CD4-positive, alpha-beta memory T cell (primary cell): ENCODE measurements at regions of chr1 and their contacts with region 1.

Region 1: GRCh38 chr1:22025368-22026155 is 24.1 kb downstream of the CELA3A start:
- DNase-seq: peak; percentile 89 to 97 (median 92)
- H3K4me3 ChIP-seq: peak overlapping the region; percentile 95 to 99
- H3K4me3 Mint-ChIP-seq: peak overlapping the region; percentile 89 to 98 (median 94)
- H3K27ac ChIP-seq: peak overlapping the region; percentile 97
- H3K27ac Mint-ChIP-seq: peak overlapping the region; percentile 91 to 100 (median 99)
- H3K4me1 ChIP-seq: peaks cover 46% of the 10 kb centered on the region
- H3K4me1 Mint-ChIP-seq: peaks cover 31 to 62% (median 47%) of the 10 kb centered on the region in 4 donors
- H3K27me3 ChIP-seq: no peaks in the 10 kb centered on the region
- H3K27me3 Mint-ChIP-seq: no peaks in the 10 kb centered on the region

Region 2: GRCh38 chr1:21865943-21866706 is 159.4 kb before region 1 on chr1:
- CTCF ChIA-PET with region 1: no interaction called
- POLR2A ChIA-PET with region 1: no interaction called
- intact Hi-C with region 1: no loop called
- DNase-seq: no peak
- H3K4me3 ChIP-seq: no peak overlapping the region
- H3K4me3 Mint-ChIP-seq: no peak overlapping the region
- H3K27ac ChIP-seq: no peak overlapping the region
- H3K27ac Mint-ChIP-seq: no peak overlapping the region
- H3K4me1 ChIP-seq: no peaks in the 10 kb centered on the region
- H3K4me1 Mint-ChIP-seq: peaks cover 0 to 1% (median 0%) of the 10 kb centered on the region in 4 donors
- H3K27me3 ChIP-seq: no peaks in the 10 kb centered on the region
- H3K27me3 Mint-ChIP-seq: no peaks in the 10 kb centered on the region

Region 3: DNA sequence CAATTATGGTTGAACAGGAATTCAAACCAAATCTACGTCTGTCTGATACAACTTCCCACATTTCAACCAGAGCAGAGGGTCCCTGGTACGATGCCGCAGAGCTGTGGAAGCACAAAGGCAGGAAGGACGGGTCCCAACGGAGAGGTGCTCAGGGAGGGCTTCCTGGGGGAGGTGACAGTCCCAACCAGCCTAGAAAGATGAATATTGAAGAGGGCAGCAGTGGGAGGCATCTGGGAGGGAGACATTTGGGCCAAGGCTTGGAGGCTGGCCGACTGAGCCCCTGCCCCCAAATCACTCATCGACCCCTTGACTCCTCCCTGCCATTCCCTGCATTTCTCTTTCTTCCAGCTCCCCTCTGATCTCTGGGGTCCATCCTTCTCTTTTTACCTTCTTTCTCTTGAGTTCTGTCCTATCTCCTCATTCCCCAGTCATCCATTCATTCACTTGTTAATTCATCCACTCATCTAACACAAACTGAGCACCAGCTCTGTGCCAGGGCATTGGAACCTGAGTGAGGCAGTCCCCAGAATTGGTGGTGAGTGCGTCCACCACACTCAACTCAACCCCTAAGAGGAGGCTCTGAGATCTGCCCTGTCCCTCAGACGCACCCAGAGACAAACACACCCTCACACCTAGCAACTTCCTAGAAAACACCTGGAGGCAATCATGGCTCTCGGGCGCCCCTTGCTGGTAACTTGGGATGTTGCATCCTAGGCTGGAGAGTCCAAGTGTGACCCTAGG is 61.9 kb before region 1 on chr1:
- CTCF ChIA-PET with region 1: interaction called, 7 read pairs
- POLR2A ChIA-PET with region 1: no interaction called
- intact Hi-C with region 1: loop called (anchors 2 kb)
- DNase-seq: peak; percentile 70 to 82 (median 77)
- H3K4me3 ChIP-seq: no peak overlapping the region
- H3K4me3 Mint-ChIP-seq: peak overlapping the region in 1 of 8 donors; percentile 1
- H3K27ac ChIP-seq: no peak overlapping the region
- H3K27ac Mint-ChIP-seq: peak overlapping the region; percentile 4 to 90 (median 63)
- H3K4me1 ChIP-seq: peaks cover 3% of the 10 kb centered on the region
- H3K4me1 Mint-ChIP-seq: peaks cover 6 to 12% (median 6%) of the 10 kb centered on the region in 4 donors
- H3K27me3 ChIP-seq: no peaks in the 10 kb centered on the region
- H3K27me3 Mint-ChIP-seq: peaks cover 0 to 2% of the 10 kb centered on the region in 2 donors

Region 4: DNA sequence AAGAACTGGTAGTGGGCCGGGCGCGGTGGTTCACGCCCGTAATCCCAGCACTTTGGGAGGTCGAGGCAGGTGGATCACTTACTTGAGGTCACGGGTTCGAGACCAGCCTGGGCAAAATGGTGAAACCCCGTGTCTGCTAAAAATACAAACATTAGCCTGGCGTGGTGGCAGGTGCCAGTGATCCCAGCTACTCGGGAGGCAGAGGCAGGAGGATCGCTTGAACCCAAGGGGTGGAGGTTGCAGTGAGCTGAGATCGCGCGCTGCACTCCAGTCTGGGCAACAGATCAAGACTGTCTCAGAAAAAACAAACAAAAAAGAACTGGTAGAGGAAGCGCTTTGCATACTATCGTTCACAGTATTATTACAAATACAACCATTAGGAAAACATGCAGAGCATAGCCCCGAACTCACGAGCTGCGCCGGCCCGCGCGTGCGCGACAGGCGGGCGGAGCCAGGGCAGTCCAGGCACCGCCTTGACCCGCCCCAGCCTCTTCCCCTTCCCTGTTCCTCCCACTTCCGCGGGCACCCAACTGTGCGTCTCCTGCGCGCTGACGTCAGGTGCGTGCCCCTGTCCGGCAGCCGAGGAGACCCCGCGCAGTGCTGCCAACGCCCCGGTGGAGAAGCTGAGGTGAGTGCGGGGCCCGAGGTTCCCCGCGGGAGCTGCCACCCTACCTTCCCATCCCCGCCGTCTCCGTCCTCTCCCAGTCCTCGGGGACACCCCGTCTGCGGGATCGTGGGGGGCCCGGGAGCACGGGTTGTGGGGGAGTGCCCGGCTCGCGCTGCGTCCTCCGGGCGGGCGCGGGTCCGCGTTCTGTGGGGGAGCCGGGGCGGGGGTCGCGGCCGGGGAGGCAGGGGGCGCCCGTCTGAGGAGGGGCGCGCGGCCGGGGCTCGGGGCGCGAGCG is 26.8 kb after region 1 on chr1 and contains the start of gene CDC42:
- CTCF ChIA-PET with region 1: interaction called, 57 read pairs
- POLR2A ChIA-PET with region 1: interaction called, 874 read pairs
- intact Hi-C with region 1: loop called (anchors 1 kb)
- DNase-seq: peak; percentile 97 to 98 (median 98)
- H3K4me3 ChIP-seq: peak within 1 kb of the TSS; percentile 82 to 93
- H3K4me3 Mint-ChIP-seq: peak within 1 kb of the TSS; percentile 97 to 100 (median 99)
- H3K27ac ChIP-seq: peak within 1 kb of the TSS; percentile 98
- H3K27ac Mint-ChIP-seq: peak within 1 kb of the TSS; percentile 98 to 100 (median 100)
- H3K4me1 ChIP-seq: peaks cover 54% of the 10 kb centered on the region
- H3K4me1 Mint-ChIP-seq: peaks cover 34 to 75% (median 54%) of the 10 kb centered on the region in 4 donors
- H3K27me3 ChIP-seq: no peaks in the 10 kb centered on the region
- H3K27me3 Mint-ChIP-seq: no peaks in the 10 kb centered on the region
- total RNA-seq, gene CDC42: 195 to 202 TPM

Region 5: GRCh38 chr1:22071511-22071910 is 45.9 kb after region 1 on chr1:
- CTCF ChIA-PET with region 1: interaction called, 10 read pairs
- POLR2A ChIA-PET with region 1: interaction called, 27 read pairs
- intact Hi-C with region 1: no loop called
- DNase-seq: no peak
- H3K4me3 ChIP-seq: no peak overlapping the region
- H3K4me3 Mint-ChIP-seq: peak overlapping the region in 7 of 8 donors; percentile 21 to 78 (median 54)
- H3K27ac ChIP-seq: no peak overlapping the region
- H3K27ac Mint-ChIP-seq: peak overlapping the region; percentile 24 to 87 (median 78)
- H3K4me1 ChIP-seq: peaks cover 89% of the 10 kb centered on the region
- H3K4me1 Mint-ChIP-seq: peaks cover 63 to 92% (median 75%) of the 10 kb centered on the region in 4 donors
- H3K27me3 ChIP-seq: no peaks in the 10 kb centered on the region
- H3K27me3 Mint-ChIP-seq: no peaks in the 10 kb centered on the region

Region 6: DNA sequence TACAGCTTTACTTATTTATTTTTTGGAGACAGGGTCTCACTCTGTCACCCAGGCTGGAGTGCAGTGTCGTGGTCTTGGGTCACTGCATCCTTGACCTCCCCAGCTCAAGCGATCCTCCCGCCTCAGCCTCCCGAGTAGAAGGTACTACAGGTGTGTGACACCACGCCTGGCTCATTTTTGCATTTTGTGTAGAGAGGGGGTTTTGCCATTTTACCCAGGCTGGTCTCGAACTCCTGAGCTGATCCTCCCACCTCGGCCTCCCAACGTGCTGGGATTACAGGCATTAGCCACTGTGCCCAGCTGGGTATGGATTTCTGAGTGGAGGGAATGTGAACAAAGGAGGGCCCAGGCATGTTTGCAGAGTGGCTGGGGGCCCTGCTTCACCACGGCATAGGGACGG is 73.2 kb after region 1 on chr1:
- CTCF ChIA-PET with region 1: interaction called, 21 read pairs
- POLR2A ChIA-PET with region 1: interaction called, 38 read pairs
- intact Hi-C with region 1: no loop called
- DNase-seq: no peak
- H3K4me3 ChIP-seq: no peak overlapping the region
- H3K4me3 Mint-ChIP-seq: no peak overlapping the region
- H3K27ac ChIP-seq: no peak overlapping the region
- H3K27ac Mint-ChIP-seq: peak overlapping the region in 5 of 7 donors; percentile 2 to 77 (median 63)
- H3K4me1 ChIP-seq: peaks cover 59% of the 10 kb centered on the region
- H3K4me1 Mint-ChIP-seq: peaks cover 45 to 81% (median 63%) of the 10 kb centered on the region in 4 donors
- H3K27me3 ChIP-seq: no peaks in the 10 kb centered on the region
- H3K27me3 Mint-ChIP-seq: no peaks in the 10 kb centered on the region